Activated CD4-positive, alpha-beta memory T cell treated with anti-CD3 and anti-CD28 coated beads for 36 hours (primary cell): ENCODE measurements at regions of chr7 and their contacts with region 1.

Region 1: GRCh38 chr7:145036604-145037405 is 201.0 kb upstream of the TPK1 start:
- DNase-seq: peak; percentile 43
- H3K4me3 Mint-ChIP-seq: no peak overlapping the region
- H3K27ac Mint-ChIP-seq: no peak overlapping the region
- H3K4me1 Mint-ChIP-seq: peaks cover 2% of the 10 kb centered on the region
- H3K27me3 Mint-ChIP-seq: peaks cover 11% of the 10 kb centered on the region

Region 2: DNA sequence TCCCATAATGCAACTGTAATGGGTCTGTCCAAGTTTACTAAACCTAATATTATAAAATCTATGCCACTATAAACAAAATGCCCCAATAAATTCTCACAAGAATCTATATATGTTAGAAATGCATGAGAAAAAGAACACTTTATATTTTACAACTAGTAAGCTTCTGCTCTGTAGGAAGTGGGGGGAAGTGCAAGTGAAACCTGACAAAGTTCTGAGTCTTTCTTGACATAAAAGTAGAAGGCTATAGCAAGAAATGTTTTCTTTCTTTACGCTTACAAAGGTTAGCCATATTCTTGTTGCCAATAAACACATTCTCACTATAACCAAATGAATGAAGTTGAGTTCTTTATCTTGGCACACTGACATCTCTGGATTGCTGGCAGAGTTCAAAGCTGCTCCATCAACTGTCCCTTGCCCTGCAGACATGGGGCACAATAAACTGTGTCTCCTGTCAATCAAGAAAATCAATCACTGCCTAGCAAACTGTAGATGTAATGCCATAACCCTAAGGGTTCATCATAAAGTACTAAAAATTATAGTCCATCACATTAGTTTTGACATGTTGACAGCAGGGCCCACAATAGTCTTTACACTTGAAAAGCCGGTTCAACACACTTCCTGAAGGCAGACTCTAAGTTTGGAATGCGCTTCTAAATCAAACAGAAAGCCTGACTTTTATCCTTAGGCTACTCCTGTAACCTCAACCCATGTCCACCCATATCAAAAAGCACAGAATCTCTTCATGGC is 259.6 kb before region 1 on chr7:
- CTCF ChIA-PET with region 1: no interaction called
- POLR2A ChIA-PET with region 1: no interaction called
- intact Hi-C with region 1: no loop called
- DNase-seq: no peak
- H3K4me3 Mint-ChIP-seq: no peak overlapping the region
- H3K27ac Mint-ChIP-seq: no peak overlapping the region
- H3K4me1 Mint-ChIP-seq: peaks cover 22% of the 10 kb centered on the region
- H3K27me3 Mint-ChIP-seq: no peaks in the 10 kb centered on the region

Region 3: DNA sequence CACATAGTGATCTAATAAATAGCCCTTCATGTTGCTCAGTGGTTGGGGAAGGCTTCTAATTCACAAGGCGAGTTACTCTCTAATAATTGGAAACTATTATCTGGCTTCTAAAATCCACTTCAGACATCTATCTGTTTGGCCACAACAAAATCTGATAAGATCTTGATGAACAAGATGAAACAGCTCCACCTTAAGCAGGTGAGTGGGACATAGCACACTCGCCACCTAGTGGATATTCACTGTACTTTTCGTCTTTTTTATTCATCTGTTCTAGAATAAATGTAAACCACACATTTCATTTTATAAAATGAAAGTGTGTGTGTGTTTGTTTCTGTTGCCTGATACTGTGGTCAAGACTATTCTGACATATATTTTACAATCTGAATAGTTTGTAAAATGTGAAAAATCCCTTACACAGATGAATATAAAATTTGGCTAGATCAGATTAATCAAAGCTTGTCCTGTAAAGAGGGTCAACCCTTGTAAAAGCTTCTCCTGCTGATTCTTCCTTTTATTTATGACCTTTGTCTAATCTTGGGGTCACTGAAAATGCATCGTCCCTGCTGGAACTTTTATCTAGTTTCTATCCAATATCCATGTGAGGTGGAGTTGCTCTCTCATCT is 1053.3 kb after region 1 on chr7:
- CTCF ChIA-PET with region 1: interaction called, 14 read pairs
- POLR2A ChIA-PET with region 1: no interaction called
- intact Hi-C with region 1: loop called (anchors 1 kb)
- DNase-seq: no peak
- H3K4me3 Mint-ChIP-seq: no peak overlapping the region
- H3K27ac Mint-ChIP-seq: no peak overlapping the region
- H3K4me1 Mint-ChIP-seq: no peaks in the 10 kb centered on the region
- H3K27me3 Mint-ChIP-seq: no peaks in the 10 kb centered on the region